ENCODE measurements at regions of chr6 and their contacts with region 1.

Region 1: GRCh38 chr6:75299801-75300530 is 15.4 kb upstream of the TMEM30A start:
- DNase-seq: no peak
- H3K4me3 ChIP-seq: no peak overlapping the region
- H3K27ac ChIP-seq: no peak overlapping the region
- H3K4me1 ChIP-seq: no peaks in the 10 kb centered on the region
- H3K27me3 ChIP-seq: no peaks in the 10 kb centered on the region
- CTCF ChIP-seq: no peak

Region 2: GRCh38 chr6:75516757-75517156 is 216.8 kb after region 1 on chr6:
- intact Hi-C with region 1: loop called (anchors 10 kb)
- DNase-seq: no peak
- H3K4me3 ChIP-seq: no peak overlapping the region
- H3K27ac ChIP-seq: no peak overlapping the region
- H3K4me1 ChIP-seq: no peaks in the 10 kb centered on the region
- H3K27me3 ChIP-seq: no peaks in the 10 kb centered on the region
- CTCF ChIP-seq: no peak